ENCODE measurements at regions of chr20 and their contacts with region 1.

Region 1: GRCh38 chr20:23320317-23320716 is 30.3 kb upstream of the NXT1 start:
- DNase-seq: no peak
- H3K4me3 ChIP-seq: no peak overlapping the region
- H3K27ac ChIP-seq: no peak overlapping the region
- H3K4me1 ChIP-seq: peaks cover 0 to 6% (median under 1%) of the 10 kb centered on the region in 4 experiments; a peak in 1 of 7 replicates
- H3K27me3 ChIP-seq: no peaks in the 10 kb centered on the region
- CTCF ChIP-seq: peak in 1 of 3 experiments; percentile 55; a peak in 2 of 4 replicates
- EP300 ChIP-seq: no peak
- POLR2A ChIP-seq: no peak
- RAD21 ChIP-seq: peak in 1 of 2 experiments; percentile 25; a peak in 1 of 4 replicates

Region 2: GRCh38 chr20:23255716-23256385 is 64.5 kb before region 1 on chr20:
- CTCF ChIA-PET with region 1: no interaction called
- POLR2A ChIA-PET with region 1: no interaction called
- DNase-seq: peak in 1 of 2 experiments; percentile 43
- H3K4me3 ChIP-seq: no peak overlapping the region
- H3K27ac ChIP-seq: no peak overlapping the region
- H3K4me1 ChIP-seq: no peaks in the 10 kb centered on the region
- H3K27me3 ChIP-seq: no peaks in the 10 kb centered on the region
- CTCF ChIP-seq: no peak
- EP300 ChIP-seq: no peak
- POLR2A ChIP-seq: no peak
- RAD21 ChIP-seq: no peak

Region 3: DNA sequence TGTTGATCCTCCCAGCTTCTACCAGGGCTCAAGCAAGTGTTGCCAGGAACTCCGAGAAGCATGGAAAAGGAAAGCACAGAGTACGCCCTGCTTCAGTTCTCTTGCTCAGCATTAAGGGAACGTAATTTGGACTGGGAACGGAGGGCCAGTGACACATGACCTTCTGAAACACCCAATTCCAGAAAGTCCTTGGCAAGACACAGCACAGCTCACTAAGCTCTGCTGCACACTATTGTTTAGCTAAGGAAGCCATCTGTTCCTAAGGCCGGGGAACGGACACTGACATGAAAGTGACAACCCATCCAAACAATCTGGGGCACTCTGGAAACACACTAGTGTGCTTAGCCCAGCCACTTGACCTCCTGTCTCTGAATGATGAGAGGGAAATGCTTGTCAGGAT is 26.6 kb before region 1 on chr20:
- CTCF ChIA-PET with region 1: interaction called, 20 read pairs
- POLR2A ChIA-PET with region 1: no interaction called
- DNase-seq: no peak
- H3K4me3 ChIP-seq: no peak overlapping the region
- H3K27ac ChIP-seq: no peak overlapping the region
- H3K4me1 ChIP-seq: peaks cover 0 to 5% (median 1%) of the 10 kb centered on the region in 4 experiments; a peak in 2 of 7 replicates
- H3K27me3 ChIP-seq: no peaks in the 10 kb centered on the region
- CTCF ChIP-seq: no peak
- EP300 ChIP-seq: no peak
- POLR2A ChIP-seq: no peak
- RAD21 ChIP-seq: no peak

Region 4: DNA sequence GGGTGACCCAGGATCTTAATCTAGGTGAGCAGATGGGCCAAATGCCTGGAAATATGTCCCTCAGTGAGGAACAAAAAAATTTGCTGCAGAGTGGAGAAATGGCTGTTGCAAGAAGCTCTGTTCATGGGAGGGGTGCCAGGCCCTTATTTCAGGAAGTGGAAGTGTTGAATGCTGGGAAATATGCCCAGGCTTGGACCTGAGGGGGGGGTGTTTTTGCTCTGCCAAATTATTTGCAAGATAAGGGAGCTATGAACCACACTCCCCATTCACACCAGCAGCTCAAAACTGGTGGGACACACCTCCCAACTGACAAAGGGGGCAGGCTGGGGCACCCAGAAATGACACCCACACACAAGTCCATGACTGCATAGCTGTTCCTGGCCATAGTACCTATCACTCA is 359.8 kb after region 1 on chr20:
- CTCF ChIA-PET with region 1: no interaction called
- POLR2A ChIA-PET with region 1: no interaction called
- DNase-seq: no peak
- H3K4me3 ChIP-seq: no peak overlapping the region
- H3K27ac ChIP-seq: no peak overlapping the region
- H3K4me1 ChIP-seq: no peaks in the 10 kb centered on the region
- H3K27me3 ChIP-seq: no peaks in the 10 kb centered on the region
- CTCF ChIP-seq: no peak
- EP300 ChIP-seq: no peak
- POLR2A ChIP-seq: no peak
- RAD21 ChIP-seq: no peak